Activated CD4-positive, alpha-beta memory T cell treated with anti-CD3 and anti-CD28 coated beads for 36 hours (primary cell): ENCODE measurements at regions of chr11 and their contacts with region 1.

Region 1: GRCh38 chr11:8964324-8965320 is at the start of gene TMEM9B:
- DNase-seq: peak; percentile 90
- H3K4me3 Mint-ChIP-seq: peak within 1 kb of the TSS; percentile 94
- H3K27ac Mint-ChIP-seq: peak within 1 kb of the TSS; percentile 90
- H3K4me1 Mint-ChIP-seq: peaks cover 32% of the 10 kb centered on the region
- H3K27me3 Mint-ChIP-seq: no peaks in the 10 kb centered on the region
- total RNA-seq, gene TMEM9B: 17.5 to 19.1 TPM

Region 2: DNA sequence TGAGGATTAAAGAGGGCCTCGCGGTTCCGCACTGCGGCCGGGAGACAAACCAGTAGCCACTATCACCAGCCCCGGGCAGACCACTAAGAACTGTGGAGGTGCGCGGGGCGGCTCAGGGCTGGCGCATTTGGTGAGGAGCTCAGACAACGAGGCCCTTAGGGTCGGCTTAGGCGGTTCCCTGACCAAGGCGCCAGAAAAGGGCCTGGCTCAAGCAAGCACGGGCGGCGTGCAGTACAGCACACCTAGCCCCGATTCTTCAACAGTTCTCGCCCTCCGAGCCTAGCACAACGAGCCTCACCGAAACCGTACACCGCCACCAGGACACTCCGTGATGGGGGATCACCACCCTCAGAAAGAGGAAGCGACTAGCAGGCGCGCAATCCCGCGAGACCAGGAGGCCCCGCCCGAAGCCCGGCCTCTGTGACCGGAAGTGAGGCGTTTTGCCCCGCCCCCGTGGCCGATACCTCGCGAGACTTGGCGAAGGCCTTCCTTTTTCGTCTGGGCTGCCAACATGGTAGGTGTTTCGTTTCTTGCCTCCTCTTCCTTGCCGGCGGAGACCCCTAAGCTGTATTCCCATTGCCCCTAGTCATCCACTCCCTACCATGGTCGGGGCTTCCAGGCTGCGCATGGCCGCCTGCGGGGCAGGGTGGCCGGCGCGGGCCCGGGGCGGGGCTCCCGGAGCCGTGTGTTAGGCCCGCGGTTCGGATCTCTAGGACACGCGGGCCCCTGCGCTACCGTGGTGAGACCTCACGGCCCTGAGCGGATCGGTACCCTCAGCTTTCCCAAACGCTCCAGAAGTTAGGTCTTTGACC is 282.1 kb before region 1 on chr11 and contains the starts of genes RPL27A and TRIM66:
- CTCF ChIA-PET with region 1: interaction called, 4 read pairs
- POLR2A ChIA-PET with region 1: interaction called, 21 read pairs
- intact Hi-C with region 1: no loop called
- DNase-seq: peak; percentile 99
- H3K4me3 Mint-ChIP-seq: peak within 1 kb of the TSS; percentile 94
- H3K27ac Mint-ChIP-seq: peak within 1 kb of the TSS; percentile 88
- H3K4me1 Mint-ChIP-seq: peaks cover 45% of the 10 kb centered on the region
- H3K27me3 Mint-ChIP-seq: no peaks in the 10 kb centered on the region
- total RNA-seq, gene RPL27A: 1,027 to 1,094 TPM
- total RNA-seq, gene TRIM66: 18.3 to 24.2 TPM

Region 3: GRCh38 chr11:8813658-8814057 is 151.0 kb before region 1 on chr11:
- CTCF ChIA-PET with region 1: interaction called, 5 read pairs
- POLR2A ChIA-PET with region 1: interaction called, 3 read pairs
- intact Hi-C with region 1: loop called (anchors 5 kb)
- DNase-seq: peak; percentile 71
- H3K4me3 Mint-ChIP-seq: no peak overlapping the region
- H3K27ac Mint-ChIP-seq: no peak overlapping the region
- H3K4me1 Mint-ChIP-seq: peaks cover 5% of the 10 kb centered on the region
- H3K27me3 Mint-ChIP-seq: peaks cover 19% of the 10 kb centered on the region

Region 4: GRCh38 chr11:9003573-9004309 is 39.1 kb after region 1 on chr11 and contains the start of gene NRIP3:
- CTCF ChIA-PET with region 1: interaction called, 7 read pairs
- POLR2A ChIA-PET with region 1: interaction called, 4 read pairs
- intact Hi-C with region 1: loop called (anchors 1 kb)
- DNase-seq: peak; percentile 74
- H3K4me3 Mint-ChIP-seq: peak within 1 kb of the TSS; percentile 70
- H3K27ac Mint-ChIP-seq: no peak within 1 kb of the TSS
- H3K4me1 Mint-ChIP-seq: peaks cover 27% of the 10 kb centered on the region
- H3K27me3 Mint-ChIP-seq: peaks cover 36% of the 10 kb centered on the region
- total RNA-seq, gene NRIP3: 2.7 to 2.9 TPM

Region 5: DNA sequence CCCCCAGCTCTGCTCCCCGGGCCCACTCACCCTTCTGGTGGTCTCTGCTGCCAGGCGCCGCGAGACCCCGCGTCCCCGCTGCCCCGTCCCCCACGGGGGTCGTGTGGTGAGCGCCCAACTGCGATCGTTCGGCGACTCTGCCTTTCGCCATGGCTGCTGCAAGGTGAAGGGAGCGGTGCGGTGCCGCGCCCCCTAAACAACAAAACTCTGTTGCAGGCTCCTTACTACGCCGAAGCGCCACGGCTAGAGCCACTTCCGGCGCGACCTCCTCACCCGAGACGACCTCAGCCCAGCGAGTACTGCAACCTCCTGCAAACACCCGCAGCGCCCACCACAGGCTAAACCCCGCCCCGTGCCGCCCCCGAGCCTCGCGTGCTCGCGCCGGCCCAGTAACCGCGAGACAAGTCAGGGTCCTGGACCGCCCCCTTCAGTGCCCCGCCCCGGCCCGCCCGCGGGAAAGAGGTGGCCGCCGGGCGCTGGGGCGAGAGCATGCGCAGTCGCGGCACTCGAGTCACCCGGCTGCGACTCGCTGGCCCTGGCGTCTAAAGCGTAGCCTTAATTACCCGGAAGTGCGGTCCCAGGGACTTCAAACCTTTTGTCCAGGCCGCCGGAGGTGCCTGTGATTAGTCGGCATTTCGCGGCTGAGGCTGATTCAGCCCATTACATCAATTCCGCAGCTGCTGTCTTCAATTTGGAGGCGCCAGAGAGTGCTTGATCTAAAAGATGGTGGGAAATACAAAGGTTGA is 349.8 kb after region 1 on chr11 and contains the start of gene TMEM41B:
- CTCF ChIA-PET with region 1: no interaction called
- POLR2A ChIA-PET with region 1: no interaction called
- intact Hi-C with region 1: loop called (anchors 5 kb)
- DNase-seq: peak; percentile 99
- H3K4me3 Mint-ChIP-seq: peak within 1 kb of the TSS; percentile 97
- H3K27ac Mint-ChIP-seq: peak within 1 kb of the TSS; percentile 95
- H3K4me1 Mint-ChIP-seq: peaks cover 33% of the 10 kb centered on the region
- H3K27me3 Mint-ChIP-seq: peaks cover 10% of the 10 kb centered on the region
- total RNA-seq, gene TMEM41B: 33.6 to 36.1 TPM